Breast epithelium (tissue), 4 donors: ENCODE measurements at regions of chr1 and their contacts with region 1.

Region 1: GRCh38 chr1:152566681-152567080 is at the start of gene LCE3E:
- DNase-seq: no peak
- H3K4me3 ChIP-seq: no peak within 1 kb of the TSS
- H3K27ac ChIP-seq: no peak within 1 kb of the TSS
- H3K4me1 ChIP-seq: no peaks in the 10 kb centered on the region
- H3K27me3 ChIP-seq: no peaks in the 10 kb centered on the region
- CTCF ChIP-seq: no peak
- POLR2A ChIP-seq: no peak
- total RNA-seq, gene LCE3E: not detected

Region 2: GRCh38 chr1:152495066-152495675 is 71.5 kb before region 1 on chr1:
- intact Hi-C with region 1: loop called (anchors 2 kb)
- DNase-seq: no peak
- H3K4me3 ChIP-seq: no peak overlapping the region
- H3K27ac ChIP-seq: no peak overlapping the region
- H3K4me1 ChIP-seq: no peaks in the 10 kb centered on the region
- H3K27me3 ChIP-seq: no peaks in the 10 kb centered on the region
- CTCF ChIP-seq: no peak
- POLR2A ChIP-seq: no peak

Region 3: GRCh38 chr1:152519851-152520250 is 46.8 kb before region 1 on chr1:
- intact Hi-C with region 1: no loop called
- DNase-seq: no peak
- H3K4me3 ChIP-seq: no peak overlapping the region
- H3K27ac ChIP-seq: no peak overlapping the region
- H3K4me1 ChIP-seq: no peaks in the 10 kb centered on the region
- H3K27me3 ChIP-seq: peaks cover 4 to 13% of the 10 kb centered on the region in 2 donors
- CTCF ChIP-seq: no peak
- POLR2A ChIP-seq: no peak

Region 4: GRCh38 chr1:152599934-152600333 is 33.3 kb after region 1 on chr1 and contains the start of gene LCE3C:
- intact Hi-C with region 1: no loop called
- DNase-seq: no peak
- H3K4me3 ChIP-seq: no peak within 1 kb of the TSS
- H3K27ac ChIP-seq: no peak within 1 kb of the TSS
- H3K4me1 ChIP-seq: no peaks in the 10 kb centered on the region
- H3K27me3 ChIP-seq: no peaks in the 10 kb centered on the region
- CTCF ChIP-seq: no peak
- POLR2A ChIP-seq: no peak
- total RNA-seq, gene LCE3C: not detected

Region 5: GRCh38 chr1:154081386-154082126 is 1514.9 kb after region 1 on chr1:
- intact Hi-C with region 1: no loop called
- DNase-seq: no peak
- H3K4me3 ChIP-seq: no peak overlapping the region
- H3K27ac ChIP-seq: no peak overlapping the region
- H3K4me1 ChIP-seq: no peaks in the 10 kb centered on the region
- H3K27me3 ChIP-seq: no peaks in the 10 kb centered on the region
- CTCF ChIP-seq: no peak
- POLR2A ChIP-seq: no peak